H1 (cell line): ENCODE measurements at regions of chr14 and their contacts with region 1.

Region 1: GRCh38 chr14:99055019-99055418 is 217.0 kb downstream of the BCL11B start:
- DNase-seq: no peak
- H3K4me3 ChIP-seq: no peak overlapping the region
- H3K27ac ChIP-seq: no peak overlapping the region
- H3K4me1 ChIP-seq: no peaks in the 10 kb centered on the region
- H3K27me3 ChIP-seq: no peaks in the 10 kb centered on the region
- CTCF ChIP-seq: no peak
- EP300 ChIP-seq: no peak
- POLR2A ChIP-seq: no peak
- RAD21 ChIP-seq: no peak

Region 2: DNA sequence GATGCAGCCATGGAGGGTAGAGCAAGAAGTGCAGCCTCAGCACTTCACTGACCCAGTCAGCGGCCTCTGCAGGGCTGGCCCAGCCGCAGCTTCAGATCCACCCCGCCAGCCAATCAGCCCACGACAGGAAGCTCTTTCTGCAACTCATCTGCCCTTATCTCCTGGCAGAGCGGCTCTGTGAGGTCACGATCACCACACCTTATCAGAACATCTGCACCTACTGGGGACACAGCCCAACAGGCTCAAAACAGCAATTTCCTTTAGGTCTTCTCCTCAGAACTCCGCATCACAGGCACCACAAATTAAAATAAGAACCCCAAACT is 70.3 kb before region 1 on chr14:
- CTCF ChIA-PET with region 1: no interaction called
- POLR2A ChIA-PET with region 1: no interaction called
- DNase-seq: no peak
- H3K4me3 ChIP-seq: no peak overlapping the region
- H3K27ac ChIP-seq: no peak overlapping the region; the same call in 1 of the 2 replicates
- H3K4me1 ChIP-seq: 0 out of 7 replicates have a peak, but pooled peaks cover 0 to 3% (median 0%) of the 10 kb centered on the region in 4 experiments
- H3K27me3 ChIP-seq: no peaks in the 10 kb centered on the region
- CTCF ChIP-seq: no peak
- EP300 ChIP-seq: no peak
- POLR2A ChIP-seq: no peak
- RAD21 ChIP-seq: no peak

Region 3: GRCh38 chr14:99035712-99036610 is 19.1 kb before region 1 on chr14:
- CTCF ChIA-PET with region 1: interaction called, 11 read pairs
- POLR2A ChIA-PET with region 1: no interaction called
- DNase-seq: peak; percentile 47 to 71
- H3K4me3 ChIP-seq: no peak overlapping the region
- H3K27ac ChIP-seq: no peak overlapping the region
- H3K4me1 ChIP-seq: peaks cover 0 to 8% (median 1%) of the 10 kb centered on the region in 4 experiments; a peak in 4 of 7 replicates
- H3K27me3 ChIP-seq: no peaks in the 10 kb centered on the region
- CTCF ChIP-seq: peak in 2 of 3 experiments; percentile 15 to 21; a peak in 2 of 4 replicates
- EP300 ChIP-seq: no peak
- POLR2A ChIP-seq: no peak
- RAD21 ChIP-seq: no peak